Right lobe of liver (tissue), 6 donors: ENCODE measurements at regions of chr9 and their contacts with region 1.

Region 1: DNA sequence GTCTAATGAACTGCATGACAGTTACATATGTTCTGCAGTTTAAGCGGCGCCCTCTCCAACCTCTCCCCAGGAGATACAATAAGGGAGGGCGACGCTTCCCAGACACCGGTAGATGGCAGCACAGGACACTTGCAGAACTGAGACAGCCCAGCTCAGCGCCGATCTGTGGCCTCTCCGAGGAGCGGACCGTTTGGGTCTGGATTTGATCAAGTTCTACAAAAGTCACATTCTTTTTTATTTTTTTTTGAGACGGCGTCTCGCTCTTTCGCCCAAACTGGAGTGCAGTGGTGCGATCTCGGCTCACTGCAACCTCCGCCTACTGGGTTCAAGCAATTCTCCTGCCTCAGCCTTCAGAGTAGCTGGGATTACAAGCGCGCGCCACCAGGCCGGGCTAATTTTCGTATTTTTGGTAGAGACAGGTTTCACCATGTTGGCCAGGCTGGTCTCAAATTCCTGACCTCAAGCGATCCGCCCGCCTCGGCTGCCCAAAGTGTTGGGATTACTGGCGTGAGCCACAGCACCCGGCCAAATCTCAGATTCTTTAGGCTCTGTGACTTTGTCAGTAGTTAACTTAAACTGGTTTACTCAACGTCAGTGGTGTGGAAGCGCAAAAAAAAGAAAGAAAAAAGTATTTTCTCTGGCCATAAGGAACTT is 1.4 kb upstream of the ATOSB start:
- DNase-seq: peak; percentile 91 to 94 (median 92)
- ATAC-seq: peak; percentile 72 to 78 (median 74)
- H3K4me3 ChIP-seq: peak overlapping the region; percentile 47 to 64 (median 60)
- H3K27ac ChIP-seq: peak overlapping the region; percentile 43 to 85 (median 73)
- H3K4me1 ChIP-seq: peaks cover 0 to 25% (median 8%) of the 10 kb centered on the region in 4 donors
- H3K27me3 ChIP-seq: no peaks in the 10 kb centered on the region
- CTCF ChIP-seq: peak; percentile 90 to 98 (median 96)
- POLR2A ChIP-seq: no peak

Region 2: DNA sequence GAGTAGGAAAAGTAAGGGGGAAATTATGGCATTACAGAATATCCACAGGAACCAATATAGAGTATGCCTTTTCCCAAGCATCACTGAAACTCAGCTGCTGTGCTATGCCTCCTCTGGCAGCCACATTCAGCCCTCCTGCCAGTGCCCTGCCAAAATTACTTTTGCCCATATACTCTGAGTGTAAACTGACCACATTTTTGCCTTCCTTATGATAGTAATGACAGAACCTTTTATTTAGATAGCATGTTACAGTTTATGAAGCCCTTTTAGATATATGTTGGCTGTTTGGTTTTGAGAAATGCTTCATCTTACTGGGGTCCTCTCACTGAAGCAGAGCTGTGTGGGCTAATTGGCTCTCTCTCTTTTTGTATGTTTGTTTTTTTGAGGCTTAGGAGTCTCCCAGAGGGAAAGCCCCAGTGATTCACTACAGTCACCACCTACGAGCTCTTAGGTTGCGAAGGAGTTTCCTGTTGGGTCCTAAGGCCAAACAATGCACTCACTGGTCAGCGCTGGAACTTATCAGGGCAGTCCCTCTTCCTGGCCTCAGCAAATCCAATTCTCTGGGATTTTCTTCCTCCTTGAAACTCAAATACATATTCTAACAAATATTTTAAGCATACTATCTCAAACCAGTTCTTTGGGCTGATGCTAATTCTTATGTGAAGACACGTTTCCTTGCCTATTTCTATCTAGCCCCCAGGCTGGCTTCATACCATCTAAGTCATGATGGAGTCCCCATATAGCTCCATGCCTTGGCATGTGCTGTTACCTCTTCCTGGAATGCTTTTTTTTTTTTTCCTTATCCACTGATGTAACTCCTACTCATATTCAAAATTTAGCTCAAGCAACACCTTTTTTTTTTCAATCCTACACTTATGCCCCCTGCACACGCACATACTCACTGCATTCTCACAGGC is 155.2 kb before region 1 on chr9:
- intact Hi-C with region 1: no loop called
- DNase-seq: no peak
- ATAC-seq: peak; percentile 36 to 94 (median 50)
- H3K4me3 ChIP-seq: no peak overlapping the region
- H3K27ac ChIP-seq: no peak overlapping the region
- H3K4me1 ChIP-seq: peaks cover 0 to 7% (median 0%) of the 10 kb centered on the region in 4 donors
- H3K27me3 ChIP-seq: peaks cover 0 to 5% of the 10 kb centered on the region in 2 donors
- CTCF ChIP-seq: no peak
- POLR2A ChIP-seq: no peak

Region 3: GRCh38 chr9:35186524-35186923 is 69.5 kb after region 1 on chr9:
- intact Hi-C with region 1: no loop called
- DNase-seq: no peak
- ATAC-seq: no peak
- H3K4me3 ChIP-seq: no peak overlapping the region
- H3K27ac ChIP-seq: no peak overlapping the region
- H3K4me1 ChIP-seq: no peaks in the 10 kb centered on the region
- H3K27me3 ChIP-seq: no peaks in the 10 kb centered on the region
- CTCF ChIP-seq: no peak
- POLR2A ChIP-seq: no peak

Region 4: GRCh38 chr9:35258676-35259474 is 141.8 kb after region 1 on chr9:
- intact Hi-C with region 1: loop called (anchors 5 to 10 kb)
- DNase-seq: peak; percentile 68 to 80 (median 78)
- ATAC-seq: peak; percentile 81 to 90 (median 88)
- H3K4me3 ChIP-seq: peak overlapping the region in 2 of 3 donors; percentile 21 to 31
- H3K27ac ChIP-seq: peak overlapping the region; percentile 24 to 89 (median 85)
- H3K4me1 ChIP-seq: peaks cover 0 to 21% (median 7%) of the 10 kb centered on the region in 4 donors
- H3K27me3 ChIP-seq: no peaks in the 10 kb centered on the region
- CTCF ChIP-seq: peak; percentile 66 to 80 (median 72)
- POLR2A ChIP-seq: no peak

Region 5: DNA sequence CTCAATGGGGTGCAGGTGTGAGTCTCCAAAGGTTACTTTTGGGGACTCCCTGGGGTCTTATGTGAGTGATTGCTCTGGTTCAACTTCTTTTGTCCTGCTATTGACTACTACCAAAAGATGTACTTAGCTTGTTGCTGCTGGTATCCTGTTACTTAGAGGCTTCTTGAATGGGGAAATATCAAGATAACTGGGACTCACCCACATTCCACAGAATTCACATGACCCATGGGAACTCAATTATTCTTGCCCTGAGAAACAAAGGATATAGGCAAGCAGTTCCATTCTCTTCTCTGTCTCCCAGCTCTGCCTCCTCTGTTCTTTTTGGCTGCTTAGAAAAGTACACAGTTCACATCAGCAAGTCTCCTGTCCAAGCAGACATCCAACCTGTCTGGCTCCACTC is 150.7 kb after region 1 on chr9:
- intact Hi-C with region 1: loop called in 1 of 2 experiments (anchors 10 kb)
- DNase-seq: no peak
- ATAC-seq: no peak
- H3K4me3 ChIP-seq: no peak overlapping the region
- H3K27ac ChIP-seq: no peak overlapping the region
- H3K4me1 ChIP-seq: no peaks in the 10 kb centered on the region
- H3K27me3 ChIP-seq: no peaks in the 10 kb centered on the region
- CTCF ChIP-seq: no peak
- POLR2A ChIP-seq: no peak

Region 6: GRCh38 chr9:35374436-35374835 is 257.4 kb after region 1 on chr9:
- intact Hi-C with region 1: no loop called
- DNase-seq: no peak
- ATAC-seq: no peak
- H3K4me3 ChIP-seq: no peak overlapping the region
- H3K27ac ChIP-seq: no peak overlapping the region
- H3K4me1 ChIP-seq: no peaks in the 10 kb centered on the region
- H3K27me3 ChIP-seq: no peaks in the 10 kb centered on the region
- CTCF ChIP-seq: no peak
- POLR2A ChIP-seq: no peak